ENCODE measurements at regions of chr5 and their contacts with region 1.

Region 1: DNA sequence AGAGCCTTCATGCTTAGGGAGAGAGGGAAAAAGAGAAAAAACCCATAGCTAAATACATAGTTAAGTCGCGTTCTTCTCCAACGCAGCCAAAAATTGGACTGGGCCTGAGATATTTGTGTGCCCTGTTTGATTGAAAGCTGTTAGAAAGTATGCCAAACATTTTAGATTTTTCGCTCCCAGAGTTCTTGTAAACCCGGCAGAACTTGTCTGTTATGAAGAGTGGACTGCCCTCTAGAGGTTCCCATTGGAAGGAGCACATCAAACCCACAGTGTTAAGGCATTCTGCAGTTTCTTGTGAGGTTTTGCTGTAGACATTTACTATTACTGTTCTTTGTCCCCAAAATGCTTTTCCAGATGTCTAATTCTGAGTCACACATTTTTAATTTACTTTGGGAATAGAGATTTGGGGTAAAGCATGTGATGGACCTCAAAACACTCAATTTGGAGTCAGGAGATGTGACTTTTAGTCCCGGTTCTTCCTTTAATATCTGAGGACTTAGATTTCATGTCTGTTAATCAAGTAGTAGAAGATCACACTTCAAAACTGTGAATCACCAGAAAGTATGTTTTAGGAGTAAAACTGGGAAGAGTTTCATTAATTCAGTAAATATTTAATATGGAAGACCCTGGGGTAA is 96.6 kb downstream of the PCSK1 start:
- DNase-seq: peak; percentile 93
- ATAC-seq: peak; percentile 88
- H3K4me3 ChIP-seq: no peak overlapping the region
- H3K27ac ChIP-seq: peak overlapping the region; percentile 95; the same call in 1 of the 2 replicates
- H3K4me1 ChIP-seq: peaks cover 16% of the 10 kb centered on the region
- H3K27me3 ChIP-seq: no peaks in the 10 kb centered on the region
- CTCF ChIP-seq: peak; percentile 89
- POLR2A ChIP-seq: no peak
- RAD21 ChIP-seq: peak; percentile 97

Region 2: GRCh38 chr5:96067894-96068614 is 268.4 kb before region 1 on chr5:
- CTCF ChIA-PET with region 1: no interaction called
- POLR2A ChIA-PET with region 1: no interaction called
- dilution Hi-C with region 1: no loop called
- in situ Hi-C with region 1: no loop called
- intact Hi-C with region 1: loop called (anchors 5 kb)
- DNase-seq: peak; percentile 95
- ATAC-seq: peak; percentile 80
- H3K4me3 ChIP-seq: no peak overlapping the region
- H3K27ac ChIP-seq: peak overlapping the region; percentile 89
- H3K4me1 ChIP-seq: peaks cover 22% of the 10 kb centered on the region
- H3K27me3 ChIP-seq: no peaks in the 10 kb centered on the region
- CTCF ChIP-seq: no peak
- POLR2A ChIP-seq: peak; percentile 43; the same call in 1 of the 2 replicates
- RAD21 ChIP-seq: peak; percentile 10; the same call in 1 of the 2 replicates

Region 3: DNA sequence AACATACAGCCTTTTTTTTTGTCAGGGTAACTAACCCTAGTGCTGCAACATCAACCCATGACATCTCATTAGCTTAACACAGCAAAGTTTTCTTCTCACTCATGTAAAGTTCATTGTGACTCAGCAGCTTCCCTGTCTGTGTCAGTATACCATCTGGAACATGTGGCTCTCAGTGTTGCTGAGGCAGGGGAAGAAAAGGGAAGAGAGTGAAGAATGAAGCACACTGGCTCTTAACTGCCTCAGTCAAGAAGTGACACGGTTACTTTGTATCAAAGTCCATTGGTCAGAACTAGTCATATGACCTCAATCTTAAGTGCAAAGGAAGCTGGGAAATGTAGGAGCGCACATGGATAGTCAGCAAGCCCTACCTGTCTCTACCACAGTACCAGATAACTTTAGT is 189.8 kb before region 1 on chr5:
- CTCF ChIA-PET with region 1: interaction called, 4 read pairs
- POLR2A ChIA-PET with region 1: no interaction called
- dilution Hi-C with region 1: no loop called
- in situ Hi-C with region 1: no loop called
- intact Hi-C with region 1: loop called (anchors 5 kb)
- DNase-seq: peak; percentile 95
- ATAC-seq: peak; percentile 69
- H3K4me3 ChIP-seq: no peak overlapping the region
- H3K27ac ChIP-seq: peak overlapping the region; percentile 58; the same call in 1 of the 2 replicates
- H3K4me1 ChIP-seq: peaks cover 21% of the 10 kb centered on the region
- H3K27me3 ChIP-seq: no peaks in the 10 kb centered on the region
- CTCF ChIP-seq: no peak
- POLR2A ChIP-seq: no peak
- RAD21 ChIP-seq: no peak

Region 4: DNA sequence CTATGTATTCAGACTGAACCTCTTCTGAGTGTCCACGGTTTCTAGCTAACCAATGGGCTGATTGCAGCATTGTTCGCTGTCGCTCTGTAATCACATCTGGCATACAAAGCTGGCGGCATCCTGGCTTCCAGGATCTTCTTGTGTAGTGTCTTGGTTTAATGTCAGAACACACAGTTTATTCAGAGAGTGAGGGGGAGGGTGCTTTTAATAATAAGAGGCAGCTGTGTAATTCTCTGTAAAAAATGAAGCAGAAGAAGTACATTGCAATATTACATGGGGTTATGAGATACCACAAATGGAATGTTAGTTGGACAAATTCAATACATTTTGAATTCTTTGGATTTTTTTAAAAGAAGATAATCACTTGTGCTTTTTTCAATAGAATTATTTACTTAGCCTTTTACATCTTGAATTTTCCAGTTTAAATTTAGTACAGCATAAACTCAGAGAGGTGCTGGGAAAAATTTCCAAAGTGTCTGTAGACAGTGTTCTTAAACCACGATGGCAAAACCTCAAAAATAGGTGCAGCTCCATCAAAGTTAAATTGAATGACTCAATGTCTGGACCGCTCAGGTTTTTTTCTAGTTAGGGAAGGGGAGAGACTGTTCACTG is 109.4 kb before region 1 on chr5:
- CTCF ChIA-PET with region 1: no interaction called
- POLR2A ChIA-PET with region 1: no interaction called
- dilution Hi-C with region 1: no loop called
- in situ Hi-C with region 1: no loop called
- intact Hi-C with region 1: loop called (anchors 5 kb)
- DNase-seq: peak; percentile 97
- ATAC-seq: peak; percentile 97
- H3K4me3 ChIP-seq: no peak overlapping the region
- H3K27ac ChIP-seq: peak overlapping the region; percentile 100
- H3K4me1 ChIP-seq: peaks cover 9% of the 10 kb centered on the region
- H3K27me3 ChIP-seq: no peaks in the 10 kb centered on the region
- CTCF ChIP-seq: no peak
- POLR2A ChIP-seq: no peak
- RAD21 ChIP-seq: peak; percentile 8; the same call in 1 of the 2 replicates

Region 5: DNA sequence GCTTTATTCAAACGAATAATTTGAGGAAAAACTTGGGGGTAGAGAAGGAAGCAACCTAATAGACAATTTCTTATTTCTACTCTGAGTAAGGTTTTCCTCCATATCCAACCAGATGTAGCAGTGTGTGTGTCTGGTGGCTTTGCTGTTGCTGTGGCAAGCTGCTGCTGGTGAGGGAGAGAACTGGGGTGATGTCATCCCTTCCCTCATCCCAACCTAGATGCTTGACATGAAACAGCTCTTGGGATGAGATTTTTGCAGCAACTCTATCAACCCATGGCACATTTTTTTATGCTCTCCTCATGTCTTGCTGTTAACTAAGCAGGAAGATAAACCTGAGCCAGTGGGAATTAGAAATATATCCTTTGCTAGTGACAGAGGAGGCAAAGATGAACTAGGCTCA is 39.2 kb before region 1 on chr5:
- CTCF ChIA-PET with region 1: interaction called, 5 read pairs
- POLR2A ChIA-PET with region 1: no interaction called
- dilution Hi-C with region 1: no loop called
- in situ Hi-C with region 1: no loop called
- intact Hi-C with region 1: loop called (anchors 2 kb)
- DNase-seq: peak; percentile 98
- ATAC-seq: peak; percentile 64
- H3K4me3 ChIP-seq: no peak overlapping the region
- H3K27ac ChIP-seq: peak overlapping the region; percentile 53; the same call in 1 of the 2 replicates
- H3K4me1 ChIP-seq: peaks cover 8% of the 10 kb centered on the region
- H3K27me3 ChIP-seq: no peaks in the 10 kb centered on the region
- CTCF ChIP-seq: no peak
- POLR2A ChIP-seq: peak; percentile 63; the same call in 1 of the 2 replicates
- RAD21 ChIP-seq: peak; percentile 36; the same call in 1 of the 2 replicates